ENCODE measurements at regions of chr17 and their contacts with region 1.

Region 1: GRCh38 chr17:21275579-21276263 is 8.8 kb upstream of the MAP2K3 start:
- DNase-seq: peak; percentile 80 to 98 (median 93)
- ATAC-seq: peak; percentile 72
- H3K4me3 ChIP-seq: peak overlapping the region; percentile 57
- H3K4me3 Mint-ChIP-seq: peak overlapping the region; percentile 94
- H3K27ac ChIP-seq: peak overlapping the region; percentile 45 to 83
- H3K27ac Mint-ChIP-seq: peak overlapping the region; percentile 72
- H3K4me1 ChIP-seq: peaks cover 54% of the 10 kb centered on the region
- H3K4me1 Mint-ChIP-seq: peaks cover 47% of the 10 kb centered on the region
- H3K27me3 ChIP-seq: no peaks in the 10 kb centered on the region
- H3K27me3 Mint-ChIP-seq: no peaks in the 10 kb centered on the region
- CTCF ChIP-seq: no peak

Region 2: GRCh38 chr17:21119247-21119918 is 156.3 kb before region 1 on chr17:
- CTCF ChIA-PET with region 1: interaction called, 12 read pairs
- POLR2A ChIA-PET with region 1: no interaction called
- intact Hi-C with region 1: loop called in 1 of 2 experiments (anchors 2 kb)
- DNase-seq: peak; percentile 52 to 88 (median 63)
- ATAC-seq: peak; percentile 98
- H3K4me3 ChIP-seq: no peak overlapping the region
- H3K4me3 Mint-ChIP-seq: no peak overlapping the region
- H3K27ac ChIP-seq: no peak overlapping the region
- H3K27ac Mint-ChIP-seq: no peak overlapping the region
- H3K4me1 ChIP-seq: peaks cover 4% of the 10 kb centered on the region
- H3K4me1 Mint-ChIP-seq: peaks cover 10% of the 10 kb centered on the region
- H3K27me3 ChIP-seq: no peaks in the 10 kb centered on the region
- H3K27me3 Mint-ChIP-seq: peaks cover 4% of the 10 kb centered on the region
- CTCF ChIP-seq: peak; percentile 80

Region 3: GRCh38 chr17:21126645-21127510 is 148.8 kb before region 1 on chr17 and contains the start of gene DHRS7B:
- CTCF ChIA-PET with region 1: interaction called, 4 read pairs
- POLR2A ChIA-PET with region 1: interaction called, 3 read pairs
- intact Hi-C with region 1: loop called in 1 of 2 experiments (anchors 2 kb)
- DNase-seq: peak; percentile 93 to 98 (median 96)
- ATAC-seq: peak; percentile 86
- H3K4me3 ChIP-seq: peak within 1 kb of the TSS; percentile 68
- H3K4me3 Mint-ChIP-seq: peak within 1 kb of the TSS; percentile 93
- H3K27ac ChIP-seq: peak within 1 kb of the TSS; percentile 90 to 93
- H3K27ac Mint-ChIP-seq: peak within 1 kb of the TSS; percentile 93
- H3K4me1 ChIP-seq: peaks cover 18% of the 10 kb centered on the region
- H3K4me1 Mint-ChIP-seq: peaks cover 45% of the 10 kb centered on the region
- H3K27me3 ChIP-seq: no peaks in the 10 kb centered on the region
- H3K27me3 Mint-ChIP-seq: no peaks in the 10 kb centered on the region
- CTCF ChIP-seq: no peak
- total RNA-seq, gene DHRS7B: 4.9 to 5.2 TPM

Region 4: GRCh38 chr17:21252796-21253645 is 22.7 kb before region 1 on chr17 and contains the start of gene NATD1:
- CTCF ChIA-PET with region 1: interaction called, 5 read pairs
- POLR2A ChIA-PET with region 1: interaction called, 15 read pairs
- intact Hi-C with region 1: no loop called
- DNase-seq: peak; percentile 64 to 92 (median 76)
- ATAC-seq: peak; percentile 80
- H3K4me3 ChIP-seq: peak within 1 kb of the TSS; percentile 67
- H3K4me3 Mint-ChIP-seq: peak within 1 kb of the TSS; percentile 93
- H3K27ac ChIP-seq: peak within 1 kb of the TSS; percentile 54 to 58
- H3K27ac Mint-ChIP-seq: peak within 1 kb of the TSS; percentile 94
- H3K4me1 ChIP-seq: peaks cover 27% of the 10 kb centered on the region
- H3K4me1 Mint-ChIP-seq: peaks cover 42% of the 10 kb centered on the region
- H3K27me3 ChIP-seq: no peaks in the 10 kb centered on the region
- H3K27me3 Mint-ChIP-seq: no peaks in the 10 kb centered on the region
- CTCF ChIP-seq: no peak
- total RNA-seq, gene NATD1: 5.9 to 6.1 TPM

Region 5: DNA sequence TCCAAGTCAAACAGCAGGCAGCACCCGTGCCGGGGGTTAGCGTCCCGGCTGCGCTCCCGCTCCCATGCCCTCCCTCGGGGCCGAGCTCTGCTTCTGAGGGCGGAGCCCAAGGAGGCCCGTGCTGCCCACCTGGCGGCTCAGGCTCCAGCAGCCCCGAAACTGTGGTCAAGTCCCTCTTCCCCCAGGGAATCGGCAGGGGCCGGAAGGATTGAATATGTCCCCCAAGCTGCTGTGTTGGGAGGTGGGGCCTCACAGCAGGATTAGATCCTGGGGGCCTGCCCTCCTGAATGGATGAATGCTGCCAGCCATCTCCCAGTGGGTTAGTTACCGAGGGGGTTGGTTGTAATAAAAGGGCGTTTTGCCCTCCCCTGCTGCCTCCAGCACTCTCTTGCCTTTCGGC is 42.7 kb after region 1 on chr17:
- CTCF ChIA-PET with region 1: interaction called, 4 read pairs
- POLR2A ChIA-PET with region 1: no interaction called
- intact Hi-C with region 1: loop called (anchors 2 to 5 kb)
- DNase-seq: peak in 1 of 14 experiments; percentile 18
- ATAC-seq: no peak
- H3K4me3 ChIP-seq: no peak overlapping the region
- H3K4me3 Mint-ChIP-seq: no peak overlapping the region
- H3K27ac ChIP-seq: no peak overlapping the region
- H3K27ac Mint-ChIP-seq: no peak overlapping the region
- H3K4me1 ChIP-seq: peaks cover 14% of the 10 kb centered on the region
- H3K4me1 Mint-ChIP-seq: peaks cover 6% of the 10 kb centered on the region
- H3K27me3 ChIP-seq: no peaks in the 10 kb centered on the region
- H3K27me3 Mint-ChIP-seq: peaks cover 4% of the 10 kb centered on the region
- CTCF ChIP-seq: no peak